ENCODE measurements at regions of chr6 and their contacts with region 1.

Region 1: DNA sequence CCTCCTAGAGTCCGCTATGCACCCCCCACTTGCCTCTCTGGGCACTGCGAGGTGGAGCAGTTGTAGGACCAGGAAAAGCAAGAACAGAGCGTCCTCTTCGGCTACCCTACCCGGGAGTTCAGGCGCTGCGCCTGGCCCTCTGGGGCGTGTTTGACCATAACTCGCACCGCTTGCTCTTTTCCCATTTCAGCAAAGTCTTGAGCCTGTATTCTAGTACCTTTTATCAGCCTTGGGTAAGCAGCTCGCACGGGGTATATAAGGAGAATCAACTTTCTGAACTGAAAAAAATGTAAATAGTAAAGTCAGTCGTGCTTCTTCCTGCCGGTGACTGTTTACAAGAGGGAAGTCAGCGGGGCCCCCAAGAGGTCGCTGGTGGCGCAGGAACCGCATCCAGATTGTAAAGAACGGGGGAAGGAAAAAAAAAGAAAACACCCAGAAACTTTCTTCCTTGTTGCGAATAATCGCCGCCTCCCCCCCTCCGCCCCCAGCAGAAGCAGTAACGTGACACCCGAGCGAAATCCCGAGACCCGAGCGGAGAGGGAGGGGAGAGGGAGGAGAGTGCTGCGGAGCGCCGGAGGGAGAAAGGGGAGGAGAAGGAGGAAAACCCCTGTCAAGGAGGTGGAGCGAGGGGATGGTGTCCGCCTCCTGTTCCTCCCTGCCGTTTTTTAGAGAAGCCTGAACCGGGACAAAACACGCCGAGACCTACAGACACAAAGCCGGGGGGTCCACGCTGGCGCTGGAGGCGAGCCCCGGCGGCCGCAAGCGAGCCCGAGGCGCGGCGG is at the start of gene UST:
- DNase-seq: peak in 2 of 3 donors; percentile 43 to 49
- H3K4me3 ChIP-seq: peak within 1 kb of the TSS; percentile 44 to 87 (median 71)
- H3K4me3 Mint-ChIP-seq: peak within 1 kb of the TSS; percentile 92 to 96
- H3K27ac ChIP-seq: no peak within 1 kb of the TSS
- H3K27ac Mint-ChIP-seq: peak within 1 kb of the TSS in 5 of 7 donors; percentile 30 to 76 (median 60)
- H3K4me1 ChIP-seq: peaks cover 24% of the 10 kb centered on the region in 2 donors
- H3K4me1 Mint-ChIP-seq: peaks cover 21% of the 10 kb centered on the region
- H3K27me3 ChIP-seq: peaks cover 37 to 65% of the 10 kb centered on the region in 2 donors
- H3K27me3 Mint-ChIP-seq: peaks cover 58 to 78% (median 65%) of the 10 kb centered on the region in 3 donors
- CTCF ChIP-seq: peak; percentile 39
- polyA plus RNA-seq, gene UST: 0.33 to 0.53 (median 0.48) TPM

Region 2: DNA sequence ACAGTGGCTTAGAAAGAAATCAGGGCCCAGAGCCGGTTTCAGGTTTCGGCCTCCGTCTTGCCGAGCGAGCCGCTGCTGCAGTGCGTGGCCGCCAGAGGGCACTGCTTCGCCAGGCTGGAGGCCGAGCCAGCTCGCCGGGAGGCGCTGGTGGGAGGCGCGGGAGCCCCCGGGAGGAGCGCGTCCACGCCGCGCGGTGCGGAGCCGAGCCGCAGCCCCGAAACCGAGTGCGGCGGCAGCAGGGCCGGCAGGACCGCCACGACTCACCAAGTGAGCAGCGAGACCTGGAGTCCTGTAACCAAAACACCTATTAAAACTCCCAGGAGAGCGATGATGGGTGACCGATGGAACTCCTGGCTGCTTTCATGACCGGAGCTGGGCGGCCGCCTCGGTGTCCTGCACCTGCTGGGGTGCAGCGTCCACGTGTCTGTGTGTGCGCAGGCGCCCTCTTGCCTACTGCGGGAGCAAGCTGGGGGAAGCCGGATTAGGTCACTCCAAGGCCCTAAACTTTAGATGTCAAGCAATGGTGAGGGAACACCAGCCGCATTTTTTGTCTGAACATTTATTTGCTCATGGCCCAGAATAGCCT is 186.6 kb before region 1 on chr6:
- intact Hi-C with region 1: loop called in 1 of 2 experiments (anchors 10 kb)
- DNase-seq: peak; percentile 44 to 62 (median 51)
- H3K4me3 ChIP-seq: peak overlapping the region; percentile 15 to 73 (median 25)
- H3K4me3 Mint-ChIP-seq: peak overlapping the region; percentile 37 to 72
- H3K27ac ChIP-seq: no peak overlapping the region
- H3K27ac Mint-ChIP-seq: no peak overlapping the region
- H3K4me1 ChIP-seq: peaks cover 33 to 40% of the 10 kb centered on the region in 2 donors
- H3K4me1 Mint-ChIP-seq: peaks cover 37% of the 10 kb centered on the region
- H3K27me3 ChIP-seq: no peaks in the 10 kb centered on the region
- H3K27me3 Mint-ChIP-seq: peaks cover 5 to 15% (median 6%) of the 10 kb centered on the region in 3 donors
- CTCF ChIP-seq: peak; percentile 92

Region 3: DNA sequence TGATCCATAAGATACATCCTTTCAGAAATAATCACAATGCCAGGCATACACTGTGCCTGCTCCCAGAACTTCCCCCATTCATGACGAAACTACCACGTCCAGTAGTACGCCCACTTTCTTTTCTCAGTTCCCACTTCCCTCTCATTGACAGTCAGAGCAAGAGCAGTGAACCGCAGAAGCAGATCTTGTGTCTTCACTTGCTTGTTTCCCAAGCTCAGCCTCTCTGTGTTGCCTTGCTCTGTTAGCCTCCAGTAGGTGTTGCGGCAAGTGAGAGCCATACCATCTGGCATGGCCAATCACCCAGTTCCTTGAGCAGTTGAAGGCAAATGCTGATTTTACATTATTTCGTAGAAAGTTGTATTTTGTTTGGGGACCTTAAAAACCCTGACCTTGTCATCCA is 11.9 kb after region 1 on chr6:
- intact Hi-C with region 1: loop called in 1 of 2 experiments (anchors 1 kb)
- DNase-seq: peak; percentile 87 to 92 (median 92)
- H3K4me3 ChIP-seq: peak overlapping the region in 1 of 3 experiments; percentile 29
- H3K4me3 Mint-ChIP-seq: peak overlapping the region in 1 of 2 donors; percentile 65
- H3K27ac ChIP-seq: peak overlapping the region; percentile 70 to 72
- H3K27ac Mint-ChIP-seq: peak overlapping the region; percentile 83 to 91 (median 86)
- H3K4me1 ChIP-seq: peaks cover 44 to 45% of the 10 kb centered on the region in 2 donors
- H3K4me1 Mint-ChIP-seq: peaks cover 44% of the 10 kb centered on the region
- H3K27me3 ChIP-seq: peaks cover 0 to under 1% of the 10 kb centered on the region in 2 donors
- H3K27me3 Mint-ChIP-seq: peaks cover 5 to 14% (median 14%) of the 10 kb centered on the region in 3 donors
- CTCF ChIP-seq: no peak

Region 4: DNA sequence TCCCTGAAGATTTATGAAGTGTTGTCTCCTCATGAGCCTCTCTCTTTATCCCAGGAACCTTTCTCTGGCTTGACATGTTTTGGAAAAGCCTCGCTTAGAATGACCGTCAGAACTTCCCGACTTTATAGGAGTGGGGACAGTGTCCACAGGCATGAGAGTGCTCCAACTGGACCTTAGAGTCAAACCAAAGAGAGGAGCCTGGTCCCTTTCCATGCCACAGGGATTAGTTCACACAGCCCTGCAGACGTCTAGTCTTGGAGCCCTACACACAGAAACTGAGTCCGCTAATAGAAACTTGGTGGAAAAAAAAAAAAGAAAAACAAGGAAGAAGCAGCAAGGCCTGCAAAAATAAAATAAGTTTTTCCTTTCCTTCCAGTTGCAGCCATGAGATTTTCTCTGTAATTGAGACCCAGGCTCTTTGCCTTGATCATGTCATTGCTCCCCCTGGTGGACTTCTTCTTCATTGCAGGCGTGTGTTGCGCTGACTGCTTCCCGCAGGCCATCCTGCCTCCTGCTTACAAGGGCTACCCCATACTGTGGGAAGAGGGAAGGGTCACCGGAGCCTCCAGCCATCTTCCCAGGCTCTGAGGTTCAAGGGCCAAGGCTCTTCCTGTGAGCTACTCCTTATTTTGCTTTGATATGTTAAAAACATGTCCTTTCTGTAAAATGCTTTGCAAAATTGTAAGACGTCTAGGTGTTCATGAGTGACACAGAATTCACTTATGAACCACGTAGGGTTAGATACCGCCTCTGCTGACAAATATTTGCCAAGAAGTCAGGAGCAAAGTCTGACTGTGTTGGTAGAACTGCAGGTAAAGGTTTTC is 201.3 kb after region 1 on chr6:
- intact Hi-C with region 1: loop called in 1 of 2 experiments (anchors 5 kb)
- DNase-seq: peak; percentile 52 to 64 (median 64)
- H3K4me3 ChIP-seq: no peak overlapping the region
- H3K4me3 Mint-ChIP-seq: no peak overlapping the region
- H3K27ac ChIP-seq: no peak overlapping the region
- H3K27ac Mint-ChIP-seq: no peak overlapping the region
- H3K4me1 ChIP-seq: no peaks in the 10 kb centered on the region
- H3K4me1 Mint-ChIP-seq: no peaks in the 10 kb centered on the region
- H3K27me3 ChIP-seq: no peaks in the 10 kb centered on the region
- H3K27me3 Mint-ChIP-seq: peaks cover 0 to 7% (median 6%) of the 10 kb centered on the region in 3 donors
- CTCF ChIP-seq: peak; percentile 88